Posterior vena cava (tissue), 2 donors: ENCODE measurements at regions of chr9 and their contacts with region 1.

Region 1: GRCh38 chr9:129473523-129474229 is 147.2 kb downstream of the C9orf50 start:
- DNase-seq: peak; percentile 88

Region 2: GRCh38 chr9:129320575-129321263 is 153.0 kb before region 1 on chr9:
- intact Hi-C with region 1: loop called in 1 of 2 experiments (anchors 10 kb)
- DNase-seq: peak; percentile 87

Region 3: DNA sequence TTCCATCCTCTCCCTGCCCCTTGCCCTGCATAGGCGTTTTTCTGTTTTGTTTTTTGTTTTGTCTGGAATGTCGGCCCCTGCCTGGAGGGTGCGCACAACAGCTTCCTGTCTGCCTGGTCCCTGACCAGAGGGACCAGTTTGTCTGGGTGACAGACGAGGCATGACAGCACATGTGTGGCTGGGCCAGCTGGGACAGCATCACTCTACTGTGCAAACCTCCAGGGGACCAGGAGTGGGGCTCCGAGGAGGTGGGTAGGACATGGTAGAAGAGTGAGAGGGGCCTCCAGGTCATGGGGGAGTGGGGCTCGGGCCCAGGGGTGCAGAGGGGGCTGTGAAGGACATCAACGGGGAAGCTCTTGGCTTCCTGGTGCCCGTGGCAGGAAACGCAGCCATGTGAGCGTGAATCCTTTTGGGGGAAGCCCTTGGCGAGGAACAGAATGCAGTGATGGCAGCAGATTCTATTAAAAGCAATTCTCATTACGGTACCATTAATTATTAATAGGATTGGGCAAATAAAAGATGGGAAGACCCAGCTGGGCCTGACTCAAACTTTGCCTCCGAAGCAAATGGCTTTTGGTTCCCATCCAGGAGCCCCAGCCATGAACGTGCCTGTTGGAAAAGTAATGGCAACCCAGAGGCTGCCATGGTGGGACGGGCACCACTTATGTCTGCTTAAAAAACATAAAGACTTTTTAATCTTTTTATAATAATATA is 111.2 kb before region 1 on chr9:
- intact Hi-C with region 1: no loop called
- DNase-seq: no peak

Region 4: DNA sequence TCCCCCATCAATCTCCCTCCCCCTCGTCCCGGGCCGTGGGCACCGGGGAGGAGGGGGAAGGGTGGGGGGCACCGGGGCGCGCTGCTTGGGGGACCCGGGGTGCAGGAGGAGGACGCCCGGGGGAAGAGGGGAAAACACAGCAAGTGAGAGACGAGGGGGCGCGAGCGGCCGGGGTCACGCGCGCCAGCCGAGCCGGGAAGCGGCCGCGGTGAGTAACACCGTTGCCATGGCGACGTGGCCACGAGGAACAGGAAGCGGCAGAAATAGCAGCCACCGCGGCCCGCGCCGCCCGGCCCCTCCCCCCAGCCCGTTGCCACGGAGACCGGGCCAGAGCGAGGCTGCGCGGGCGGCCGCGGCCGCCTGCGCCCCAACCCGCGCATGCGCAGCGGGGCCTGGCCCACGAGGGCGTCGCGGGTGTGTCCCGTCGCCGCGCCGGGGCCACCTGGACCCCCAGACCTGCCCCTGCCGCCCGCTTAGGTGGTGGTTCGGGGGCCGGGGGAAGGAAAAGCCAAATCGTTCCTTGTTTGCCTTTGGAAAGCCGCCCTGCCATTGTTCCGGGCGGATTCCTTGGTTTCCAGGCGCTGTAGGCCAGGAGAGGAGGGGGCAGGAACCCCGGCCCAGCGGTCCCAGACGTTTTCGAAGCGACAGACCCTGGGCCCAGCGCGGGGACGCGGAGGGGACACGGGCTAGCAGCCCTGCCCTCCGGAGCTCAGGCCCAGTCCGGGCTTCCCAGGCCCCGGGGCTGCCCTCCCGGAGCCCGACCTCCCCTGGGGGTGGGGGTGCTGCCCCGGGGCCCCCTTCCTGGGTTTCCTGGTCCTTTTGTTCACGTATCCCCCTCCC is 59.9 kb before region 1 on chr9:
- intact Hi-C with region 1: loop called in 1 of 2 experiments (anchors 10 kb)
- DNase-seq: peak; percentile 100

Region 5: GRCh38 chr9:129436751-129437625 is 36.7 kb before region 1 on chr9:
- intact Hi-C with region 1: no loop called
- DNase-seq: no peak